Transverse colon (tissue), 4 donors: ENCODE measurements at regions of chr3 and their contacts with region 1.

Region 1: DNA sequence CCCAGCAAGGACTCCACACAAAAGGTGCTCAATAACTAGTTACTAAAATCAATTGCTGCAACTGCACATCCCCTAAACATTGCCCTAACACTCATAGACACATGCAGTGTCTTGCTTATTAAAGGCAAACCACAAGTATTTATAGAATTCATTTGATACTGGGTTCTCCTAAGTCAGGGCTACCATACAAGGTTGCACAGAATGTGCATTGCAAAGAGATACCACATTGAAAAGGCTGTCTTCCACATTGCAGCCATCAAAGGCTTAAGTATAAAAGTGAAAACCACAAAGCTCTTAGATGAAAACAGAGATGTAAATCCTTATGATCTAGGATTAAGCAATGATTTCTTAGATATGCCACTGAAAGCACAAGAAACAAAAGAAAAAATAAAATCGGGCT is 33.6 kb upstream of the TOPAZ1 start:
- DNase-seq: no peak
- H3K4me3 ChIP-seq: no peak overlapping the region
- H3K27ac ChIP-seq: no peak overlapping the region
- H3K4me1 ChIP-seq: no peaks in the 10 kb centered on the region
- H3K27me3 ChIP-seq: peaks cover 3% of the 10 kb centered on the region
- CTCF ChIP-seq: no peak
- EP300 ChIP-seq: no peak
- POLR2A ChIP-seq: no peak

Region 2: DNA sequence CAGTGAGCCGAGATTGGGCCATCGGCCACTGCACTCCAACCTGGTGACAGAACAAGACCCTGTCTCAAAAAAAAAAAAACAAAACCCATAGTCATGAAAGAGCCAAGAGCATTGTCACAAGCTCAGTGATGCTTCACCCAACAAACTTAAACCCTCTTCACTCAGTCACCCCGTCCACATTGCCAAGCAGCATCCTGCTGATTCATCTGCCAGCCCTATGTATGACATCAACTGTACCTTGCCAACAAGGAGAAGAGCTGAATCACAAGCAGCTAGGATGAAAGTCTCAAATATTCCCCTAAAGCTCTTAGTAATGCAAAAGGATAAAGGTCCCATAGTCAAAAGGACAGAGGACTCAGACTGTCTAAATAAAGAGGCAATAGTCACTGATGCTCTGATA is 676.3 kb before region 1 on chr3:
- in situ Hi-C with region 1: loop called in 1 of 4 experiments (anchors 25 kb)
- intact Hi-C with region 1: no loop called
- DNase-seq: no peak
- H3K4me3 ChIP-seq: no peak overlapping the region
- H3K27ac ChIP-seq: no peak overlapping the region
- H3K4me1 ChIP-seq: no peaks in the 10 kb centered on the region
- H3K27me3 ChIP-seq: no peaks in the 10 kb centered on the region
- CTCF ChIP-seq: no peak
- EP300 ChIP-seq: no peak
- POLR2A ChIP-seq: no peak